Activated CD4-positive, alpha-beta T cell treated with anti-CD3 and anti-CD28 coated beads, Interleukin-2, amount 10 ng/mL, durations not matched to agents 24 days and 14 days (primary cell): ENCODE measurements at regions of chr7 and their contacts with region 1.

Region 1: GRCh38 chr7:64902806-64903721 is at the start of gene ZNF273:
- DNase-seq: peak; percentile 97
- H3K4me3 Mint-ChIP-seq: peak within 1 kb of the TSS; percentile 98
- H3K27ac Mint-ChIP-seq: peak within 1 kb of the TSS; percentile 97
- H3K4me1 Mint-ChIP-seq: peaks cover 24% of the 10 kb centered on the region
- H3K27me3 Mint-ChIP-seq: no peaks in the 10 kb centered on the region
- total RNA-seq, gene ZNF273: 8.7 and 9.4 TPM in 2 replicates

Region 2: DNA sequence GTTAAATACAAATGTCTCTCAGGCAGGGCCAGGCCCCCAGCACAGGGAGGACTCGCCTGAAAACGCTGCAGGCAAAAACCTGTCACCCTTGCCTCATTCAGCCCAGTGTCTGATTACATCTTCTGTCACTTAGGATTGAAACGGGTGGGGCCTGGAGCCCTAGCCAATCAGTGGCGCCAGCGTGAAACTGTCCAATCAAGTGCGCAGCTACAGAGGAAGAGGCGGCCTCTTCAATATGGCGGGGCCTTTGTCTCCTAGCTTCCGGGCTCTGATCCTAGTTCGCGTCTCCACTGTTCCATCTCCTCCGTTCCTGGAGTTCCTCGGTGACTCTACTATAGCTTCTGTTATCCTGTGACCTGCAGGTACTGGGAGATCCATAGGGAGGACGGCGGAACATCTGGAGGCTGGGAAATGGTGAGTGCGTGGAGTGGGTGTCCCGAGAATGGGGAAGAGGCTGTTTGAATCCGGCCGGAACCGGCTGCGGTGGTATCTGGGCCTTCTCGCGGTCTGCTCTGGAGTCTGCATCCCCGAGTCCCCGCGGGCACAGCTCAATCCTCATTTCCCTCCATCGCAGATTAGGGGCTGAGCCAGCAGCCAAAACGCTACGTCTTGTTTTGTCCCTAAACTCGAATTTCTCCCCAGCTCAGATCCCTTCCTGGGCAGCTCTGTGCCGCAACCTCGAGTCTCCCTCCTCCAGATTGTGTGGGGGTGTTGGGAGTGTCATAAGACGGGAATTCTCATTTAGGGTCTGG is 589.1 kb before region 1 on chr7 and contains the start of gene ZNF736:
- intact Hi-C with region 1: loop called (anchors 1 kb)
- DNase-seq: peak; percentile 95
- H3K4me3 Mint-ChIP-seq: peak within 1 kb of the TSS; percentile 98
- H3K27ac Mint-ChIP-seq: peak within 1 kb of the TSS; percentile 99
- H3K4me1 Mint-ChIP-seq: peaks cover 9% of the 10 kb centered on the region
- H3K27me3 Mint-ChIP-seq: no peaks in the 10 kb centered on the region
- total RNA-seq, gene ZNF736: 18.7 and 22.6 TPM in 2 replicates

Region 3: GRCh38 chr7:64794171-64794844 is 108.8 kb before region 1 on chr7 and contains the start of gene ZNF138:
- intact Hi-C with region 1: loop called (anchors 1 kb)
- DNase-seq: peak; percentile 97
- H3K4me3 Mint-ChIP-seq: peak within 1 kb of the TSS; percentile 100
- H3K27ac Mint-ChIP-seq: peak within 1 kb of the TSS; percentile 97
- H3K4me1 Mint-ChIP-seq: peaks cover 13% of the 10 kb centered on the region
- H3K27me3 Mint-ChIP-seq: no peaks in the 10 kb centered on the region
- total RNA-seq, gene ZNF138: 8.6 and 9.2 TPM in 2 replicates

Region 4: GRCh38 chr7:65006094-65006992 is 103.3 kb after region 1 on chr7 and contains the start of gene ERV3-1:
- intact Hi-C with region 1: loop called (anchors 1 kb)
- DNase-seq: peak; percentile 97
- H3K4me3 Mint-ChIP-seq: peak within 1 kb of the TSS; percentile 98
- H3K27ac Mint-ChIP-seq: peak within 1 kb of the TSS; percentile 95
- H3K4me1 Mint-ChIP-seq: peaks cover 26% of the 10 kb centered on the region
- H3K27me3 Mint-ChIP-seq: no peaks in the 10 kb centered on the region
- total RNA-seq, gene ERV3-1: 7.4 and 9.5 TPM in 2 replicates

Region 5: GRCh38 chr7:65037740-65038678 is 134.9 kb after region 1 on chr7:
- intact Hi-C with region 1: loop called (anchors 1 kb)
- DNase-seq: peak; percentile 96
- H3K4me3 Mint-ChIP-seq: peak overlapping the region; percentile 82
- H3K27ac Mint-ChIP-seq: peak overlapping the region; percentile 86
- H3K4me1 Mint-ChIP-seq: peaks cover 11% of the 10 kb centered on the region
- H3K27me3 Mint-ChIP-seq: no peaks in the 10 kb centered on the region